AG04450 (cell line): ENCODE measurements at regions of chr2 and their contacts with region 1.

Region 1: DNA sequence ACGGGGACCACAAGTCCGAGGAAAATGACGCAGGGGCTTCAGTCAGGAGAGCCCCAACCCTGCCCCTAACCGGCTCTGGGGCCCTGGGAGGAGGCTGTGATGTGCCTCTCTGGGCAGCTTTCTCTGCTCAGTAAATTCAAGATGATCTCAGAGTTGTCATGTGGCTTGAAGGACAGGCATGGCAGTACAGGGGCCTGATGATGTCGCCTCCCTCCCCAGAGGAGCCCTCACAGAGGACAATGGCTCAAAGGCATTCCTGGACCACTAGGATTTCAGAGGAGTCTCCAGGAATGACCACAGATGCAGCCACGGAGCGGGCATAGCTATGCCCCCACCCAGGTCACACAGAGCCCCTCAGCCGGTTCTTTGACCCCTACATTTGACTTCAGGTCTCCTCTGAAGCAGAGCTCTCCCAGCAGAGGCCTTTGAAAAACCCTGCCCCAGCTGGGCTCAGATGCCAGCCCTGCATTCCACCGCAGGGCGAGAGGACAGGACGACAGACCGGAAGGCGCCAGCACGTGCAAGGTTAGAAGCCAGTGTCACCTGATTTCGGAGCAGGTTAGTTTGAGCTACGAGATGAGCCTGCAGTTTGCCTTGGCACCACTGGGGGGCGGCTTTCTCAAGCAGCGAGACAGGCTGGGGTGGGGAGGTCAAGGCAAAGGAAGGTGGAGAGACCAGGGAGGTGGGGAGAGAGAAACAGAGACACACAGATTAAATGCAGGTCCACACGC is 39.2 kb downstream of the BIN1 start:
- DNase-seq: peak; percentile 15
- H3K4me3 ChIP-seq: no peak overlapping the region
- H3K27ac ChIP-seq: no peak overlapping the region
- H3K27me3 ChIP-seq: no peaks in the 10 kb centered on the region
- CTCF ChIP-seq: peak; percentile 92

Region 2: DNA sequence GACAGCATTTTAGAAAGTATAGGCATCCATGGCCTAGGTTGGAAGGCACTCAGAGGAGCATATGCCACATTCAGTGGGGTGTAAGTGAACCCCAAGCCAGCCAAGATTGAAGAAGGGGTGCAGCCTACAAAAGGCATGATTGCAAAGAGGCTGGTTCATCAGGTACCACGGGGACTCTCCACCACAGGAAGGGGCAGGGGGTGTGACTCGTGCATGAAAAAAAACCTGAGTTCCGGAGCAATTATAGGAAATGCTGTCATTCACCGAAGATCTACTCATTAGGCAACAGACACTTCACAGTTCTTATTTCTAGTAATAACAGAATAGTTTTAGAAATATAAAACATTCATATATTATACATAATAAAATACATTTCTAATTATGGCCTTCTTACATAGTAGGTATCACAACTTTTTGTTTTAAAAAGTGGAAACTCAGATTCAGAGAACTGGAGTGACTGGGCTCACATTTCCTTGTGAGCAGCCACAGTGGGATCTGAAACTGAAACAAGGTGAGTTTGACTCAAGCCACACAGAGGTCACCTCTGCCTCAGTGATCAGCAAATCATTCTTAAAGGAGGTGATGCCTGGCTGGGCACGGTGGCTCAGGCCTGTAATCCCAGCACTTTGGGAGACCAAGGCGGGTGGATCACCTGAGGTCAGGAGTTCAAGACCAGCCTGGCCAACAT is 600.3 kb before region 1 on chr2:
- CTCF ChIA-PET with region 1: no interaction called
- POLR2A ChIA-PET with region 1: no interaction called
- DNase-seq: no peak
- H3K4me3 ChIP-seq: no peak overlapping the region
- H3K27ac ChIP-seq: no peak overlapping the region
- H3K27me3 ChIP-seq: no peaks in the 10 kb centered on the region
- CTCF ChIP-seq: no peak

Region 3: GRCh38 chr2:127078666-127079270 is 11.0 kb after region 1 on chr2:
- CTCF ChIA-PET with region 1: interaction called, 19 read pairs
- POLR2A ChIA-PET with region 1: interaction called, 4 read pairs
- DNase-seq: no peak
- H3K4me3 ChIP-seq: no peak overlapping the region
- H3K27ac ChIP-seq: no peak overlapping the region
- H3K27me3 ChIP-seq: no peaks in the 10 kb centered on the region
- CTCF ChIP-seq: no peak

Region 4: DNA sequence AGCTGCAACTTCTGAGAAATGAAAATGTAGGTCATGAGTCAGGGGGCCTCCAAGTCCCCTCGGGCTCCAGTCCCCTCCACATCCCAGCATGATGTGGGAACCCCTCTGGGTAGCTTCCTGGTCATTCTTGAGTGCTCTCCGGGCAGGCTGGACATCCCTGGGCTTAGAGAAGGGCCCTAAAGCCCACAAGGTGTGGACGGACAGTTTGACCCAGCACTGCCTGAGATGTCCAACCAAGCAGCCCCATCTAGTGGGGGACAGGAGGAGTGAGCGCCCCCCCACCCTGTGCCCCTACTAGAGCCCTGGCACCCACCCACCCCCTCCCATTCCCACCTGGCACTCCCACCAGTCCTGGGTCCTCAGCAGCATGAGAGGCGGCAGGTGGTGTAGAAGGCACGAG is 106.4 kb after region 1 on chr2:
- CTCF ChIA-PET with region 1: interaction called, 13 read pairs
- POLR2A ChIA-PET with region 1: interaction called, 5 read pairs
- DNase-seq: no peak
- H3K4me3 ChIP-seq: no peak overlapping the region
- H3K27ac ChIP-seq: no peak overlapping the region
- H3K27me3 ChIP-seq: no peaks in the 10 kb centered on the region
- CTCF ChIP-seq: peak; percentile 48

Region 5: DNA sequence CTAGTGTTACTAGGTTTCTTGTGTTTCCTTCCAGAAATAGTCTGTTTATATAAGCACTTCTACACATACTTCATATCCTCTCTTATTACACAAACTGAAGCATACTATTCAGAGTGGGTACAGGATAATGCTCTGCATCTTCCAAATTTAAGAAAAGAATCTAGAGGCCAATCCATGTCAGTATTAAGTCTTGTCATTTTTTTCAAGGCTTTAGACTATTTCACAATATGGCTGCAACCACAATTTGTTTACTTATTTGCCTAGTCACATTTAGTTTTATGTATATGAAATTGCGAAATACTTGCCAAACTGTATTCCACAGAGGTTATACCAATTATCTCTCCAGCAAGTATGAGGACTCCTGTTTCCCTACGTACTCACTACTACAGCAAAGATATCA is 430.6 kb after region 1 on chr2:
- CTCF ChIA-PET with region 1: no interaction called
- POLR2A ChIA-PET with region 1: no interaction called
- DNase-seq: peak; percentile 38
- H3K4me3 ChIP-seq: no peak overlapping the region
- H3K27ac ChIP-seq: no peak overlapping the region
- H3K27me3 ChIP-seq: no peaks in the 10 kb centered on the region
- CTCF ChIP-seq: no peak